Posterior cingulate gyrus (tissue), 11 donors: ENCODE measurements at regions of chr10 and their contacts with region 1.

Region 1: DNA sequence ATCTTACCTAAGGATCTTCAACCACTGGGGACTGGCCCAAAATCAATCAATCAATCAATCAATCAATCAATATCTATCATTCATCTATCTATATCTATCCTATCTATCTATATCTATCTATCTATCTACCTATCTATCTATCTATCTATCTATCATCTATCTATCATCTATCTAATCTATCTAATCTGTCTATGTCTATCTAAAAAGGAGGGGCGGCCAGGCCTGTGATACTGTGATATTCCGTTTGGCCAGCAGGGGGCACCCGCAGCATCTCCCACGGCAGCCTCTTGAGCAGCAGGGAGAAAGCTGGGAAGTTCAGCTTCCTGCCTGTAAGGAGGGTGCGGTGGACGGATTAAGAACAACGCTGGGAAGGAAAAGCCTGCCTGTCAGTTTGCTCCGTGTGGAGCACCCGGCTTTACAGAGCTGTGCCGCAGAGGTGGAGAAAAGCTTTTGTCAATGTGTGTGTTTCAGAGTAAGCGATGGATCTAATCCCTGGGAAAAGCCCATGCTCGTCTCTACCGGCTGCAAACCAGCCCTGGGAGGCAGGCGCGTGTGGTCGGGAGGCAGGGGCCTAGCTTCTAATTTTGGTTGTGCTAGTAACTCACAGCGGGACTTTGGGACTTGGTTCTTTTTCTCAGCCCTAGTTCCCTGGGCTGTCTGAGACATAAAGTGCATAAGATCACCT is 125.0 kb downstream of the SH2D4B start:
- DNase-seq: peak; percentile 72 to 97 (median 86)

Region 2: DNA sequence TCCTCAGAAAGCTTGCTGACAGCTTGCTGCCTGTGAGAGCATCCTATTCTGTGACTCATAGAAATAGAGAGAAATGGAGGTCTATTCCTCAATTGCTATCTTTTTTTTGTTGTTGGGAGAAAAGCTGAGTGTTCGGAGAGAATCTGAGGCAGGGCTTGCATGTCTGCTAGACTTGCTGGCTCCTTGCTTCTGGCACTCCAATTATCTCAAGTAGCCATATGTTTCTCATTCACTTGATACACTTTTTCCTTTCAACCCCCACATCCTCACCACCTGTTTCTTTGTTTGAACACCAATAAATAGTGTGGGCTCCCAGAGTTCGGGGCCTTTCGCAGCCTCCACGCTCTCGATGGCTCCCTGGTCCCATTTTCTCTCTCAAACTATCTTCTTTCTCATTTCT is 47.1 kb after region 1 on chr10:
- intact Hi-C with region 1: no loop called
- DNase-seq: no peak

Region 3: DNA sequence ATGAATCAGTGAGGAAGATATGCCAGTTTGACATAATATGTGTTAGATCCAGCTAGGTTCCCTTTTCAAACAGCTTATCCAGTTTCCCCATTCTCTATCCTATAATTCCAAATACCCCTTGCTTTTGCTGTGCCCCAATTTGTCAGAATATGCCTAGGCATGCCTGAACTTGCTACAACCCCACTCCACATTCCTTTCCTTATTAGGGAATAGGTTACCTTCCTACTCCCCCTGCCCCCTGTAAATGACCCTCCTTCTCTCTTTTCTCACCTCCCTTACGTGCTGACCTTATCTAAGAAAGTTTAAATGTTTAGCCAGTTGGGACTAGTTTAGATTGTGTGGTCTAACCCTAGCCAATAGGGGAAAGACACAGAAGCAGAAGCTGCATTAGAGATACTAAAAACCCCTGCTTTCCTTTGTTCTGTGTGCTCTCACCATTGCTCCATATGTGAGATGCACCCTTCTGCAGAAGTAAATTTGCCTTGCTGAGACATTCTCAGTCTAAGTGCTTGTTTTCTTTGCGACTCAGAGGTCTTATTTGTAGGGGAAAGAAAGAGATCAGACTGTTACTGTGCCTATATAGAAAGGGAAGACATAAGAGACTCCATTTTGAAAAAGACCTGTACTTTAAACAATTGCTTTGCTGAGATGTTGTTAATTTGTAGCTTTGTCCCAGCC is 142.8 kb after region 1 on chr10:
- intact Hi-C with region 1: no loop called
- DNase-seq: no peak

Region 4: GRCh38 chr10:80924063-80924952 is 261.6 kb after region 1 on chr10:
- intact Hi-C with region 1: loop called (anchors 5 kb)
- DNase-seq: peak in 6 of 10 donors; percentile 8 to 65 (median 49)

Region 5: GRCh38 chr10:81018708-81019365 is 356.1 kb after region 1 on chr10:
- intact Hi-C with region 1: loop called (anchors 5 kb)
- DNase-seq: peak in 1 of 10 donors; percentile 14